HEK293T (cell line): ENCODE measurements at regions of chr6 and their contacts with region 1.

Region 1: GRCh38 chr6:43059168-43060033 is at the starts of genes KLC4 and MRPL2:
- DNase-seq: peak; percentile 99

Region 2: DNA sequence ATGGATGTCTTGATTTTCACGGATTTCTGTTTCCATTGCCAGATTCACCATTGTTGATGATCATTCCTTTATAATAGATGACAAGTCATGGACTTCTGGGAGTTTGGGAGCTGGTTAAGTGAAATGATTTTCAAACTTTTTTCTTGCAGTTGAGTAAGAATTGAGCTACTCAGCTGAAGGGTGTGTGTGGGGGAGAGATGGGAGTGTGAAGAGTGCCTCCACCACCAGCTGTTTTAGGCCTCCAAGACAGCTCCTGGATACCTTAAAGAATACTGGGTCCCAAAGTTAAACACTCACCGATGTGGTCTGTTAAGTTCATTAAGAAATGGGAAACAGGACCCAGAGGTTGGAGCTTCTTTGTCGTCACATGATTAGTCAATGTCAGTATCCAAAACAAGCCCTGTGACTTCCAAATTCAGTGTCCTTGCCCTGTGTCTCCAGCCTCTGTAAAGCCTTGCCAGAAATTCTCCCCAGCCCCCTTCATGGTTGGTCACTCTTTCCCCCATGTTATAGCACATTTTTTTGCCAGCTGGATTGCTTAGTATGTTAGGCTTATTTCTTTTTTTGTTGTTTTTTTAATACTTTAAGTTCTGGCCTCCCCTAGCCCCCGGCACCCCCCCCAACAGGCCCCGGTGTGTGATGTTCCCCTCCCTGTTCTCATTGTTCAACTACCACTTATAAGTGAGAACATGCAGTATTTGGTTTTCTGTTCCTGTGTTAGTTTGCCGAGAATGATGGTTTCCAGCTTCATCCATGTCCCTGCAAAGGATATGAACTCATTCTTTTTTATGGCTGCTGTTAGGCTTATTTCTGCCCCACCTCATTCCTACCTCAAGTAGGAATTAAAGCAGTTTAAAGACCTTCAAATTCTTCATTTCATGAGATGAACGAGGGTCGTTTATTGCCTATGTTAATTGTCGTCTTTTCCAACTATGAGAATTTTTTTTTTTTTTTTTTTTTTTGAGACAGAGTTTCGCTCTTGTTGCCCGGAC is 250.6 kb before region 1 on chr6:
- CTCF ChIA-PET with region 1: no interaction called
- POLR2A ChIA-PET with region 1: no interaction called
- DNase-seq: no peak

Region 3: DNA sequence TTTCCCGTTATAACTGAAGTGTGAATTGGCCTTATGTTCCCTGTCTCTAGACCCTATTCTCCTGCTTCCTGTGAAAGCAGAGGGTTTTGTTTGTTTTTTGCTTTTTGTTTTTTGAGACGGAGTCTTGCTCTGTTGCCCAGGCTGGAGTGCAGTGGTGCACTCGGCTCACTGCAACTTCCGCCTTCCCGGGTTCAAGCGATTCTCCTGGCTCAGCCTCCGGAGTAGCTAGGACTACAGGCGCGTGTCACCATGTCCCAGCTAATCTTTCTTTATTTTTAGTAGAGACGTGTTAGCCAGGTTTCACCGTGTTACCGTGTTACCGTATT is 99.5 kb before region 1 on chr6:
- CTCF ChIA-PET with region 1: no interaction called
- POLR2A ChIA-PET with region 1: no interaction called
- DNase-seq: no peak

Region 4: DNA sequence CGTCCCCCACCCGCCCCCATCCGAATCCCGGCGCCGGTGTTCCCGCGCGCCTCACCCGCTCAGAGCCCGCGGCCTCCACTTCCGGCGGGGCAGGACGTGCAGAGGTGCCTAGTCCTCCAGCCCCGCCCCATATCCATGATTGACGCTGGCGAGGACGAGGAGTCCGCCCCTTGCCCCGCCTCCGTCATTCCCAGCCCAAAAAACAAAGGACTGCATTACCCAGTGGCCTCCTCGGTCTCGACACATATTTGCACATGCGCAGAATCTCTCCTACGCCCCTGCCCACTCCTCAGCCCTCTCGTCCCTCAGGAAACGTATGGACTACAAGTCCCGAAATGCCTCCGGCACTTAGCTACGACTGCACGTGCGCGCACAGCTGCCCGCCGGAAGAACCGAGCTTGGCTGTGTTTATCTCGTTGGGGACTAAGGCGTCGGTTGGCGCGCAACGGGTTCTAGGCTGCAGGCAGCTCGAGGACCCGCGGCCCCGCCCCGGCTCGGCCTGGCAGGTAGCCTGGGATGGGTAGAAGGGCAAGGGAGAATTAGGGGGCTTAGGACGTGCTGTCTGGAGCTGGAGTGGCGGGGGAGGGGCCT is 45.5 kb before region 1 on chr6 and contains the starts of genes KLHDC3 and MEA1:
- CTCF ChIA-PET with region 1: no interaction called
- POLR2A ChIA-PET with region 1: interaction called, 20 read pairs
- DNase-seq: peak; percentile 99

Region 5: GRCh38 chr6:43047998-43048397 is 11.4 kb before region 1 on chr6:
- CTCF ChIA-PET with region 1: no interaction called
- POLR2A ChIA-PET with region 1: interaction called, 11 read pairs
- DNase-seq: no peak

Region 6: GRCh38 chr6:43075670-43076463 is 16.5 kb after region 1 on chr6 and contains the start of gene PTK7:
- CTCF ChIA-PET with region 1: no interaction called
- POLR2A ChIA-PET with region 1: interaction called, 12 read pairs
- DNase-seq: peak; percentile 83

Region 7: DNA sequence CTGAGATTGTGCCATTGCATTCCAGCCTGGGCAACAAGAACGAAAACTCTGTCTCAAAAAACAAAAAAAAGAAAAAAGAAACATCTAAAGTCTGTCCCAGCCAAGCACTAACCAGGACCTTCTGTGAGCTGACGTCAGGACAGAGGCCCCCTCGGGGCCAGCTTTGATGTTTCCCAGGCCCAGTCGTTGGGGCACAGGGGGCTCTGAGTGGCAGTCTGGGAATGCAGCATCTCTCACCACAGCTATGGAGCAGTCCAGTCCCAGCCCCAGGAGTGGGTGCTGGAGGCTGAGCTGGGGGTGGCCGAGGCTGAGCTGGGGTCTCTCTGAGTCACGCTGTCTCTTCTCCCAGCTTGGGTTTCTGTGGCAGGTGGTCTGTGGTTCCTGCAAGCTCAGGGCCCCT is 65.7 kb after region 1 on chr6:
- CTCF ChIA-PET with region 1: no interaction called
- POLR2A ChIA-PET with region 1: interaction called, 12 read pairs
- DNase-seq: no peak

Region 8: DNA sequence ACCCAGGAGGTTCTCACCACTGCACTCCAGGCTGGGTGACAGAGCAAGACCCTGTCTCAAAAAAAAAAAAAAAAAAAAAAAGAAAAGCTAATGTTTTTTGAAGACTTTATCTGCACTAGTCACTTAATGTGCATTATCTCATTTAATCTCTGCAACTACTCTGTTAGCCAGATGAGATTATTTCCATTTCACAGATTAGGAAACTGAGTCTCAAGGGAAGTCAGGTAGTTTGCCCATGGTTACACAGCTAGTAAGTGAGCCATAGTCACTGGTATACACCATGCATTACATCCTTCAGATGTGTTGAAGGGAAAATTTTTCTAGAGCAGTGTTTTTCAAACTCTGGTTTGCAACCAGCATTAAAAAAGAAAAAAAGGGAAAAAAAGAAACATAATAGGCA is 104.5 kb after region 1 on chr6:
- CTCF ChIA-PET with region 1: no interaction called
- POLR2A ChIA-PET with region 1: no interaction called
- DNase-seq: no peak